CD14-positive monocyte (primary cell): ENCODE measurements at regions of chr10 and their contacts with region 1.

Region 1: DNA sequence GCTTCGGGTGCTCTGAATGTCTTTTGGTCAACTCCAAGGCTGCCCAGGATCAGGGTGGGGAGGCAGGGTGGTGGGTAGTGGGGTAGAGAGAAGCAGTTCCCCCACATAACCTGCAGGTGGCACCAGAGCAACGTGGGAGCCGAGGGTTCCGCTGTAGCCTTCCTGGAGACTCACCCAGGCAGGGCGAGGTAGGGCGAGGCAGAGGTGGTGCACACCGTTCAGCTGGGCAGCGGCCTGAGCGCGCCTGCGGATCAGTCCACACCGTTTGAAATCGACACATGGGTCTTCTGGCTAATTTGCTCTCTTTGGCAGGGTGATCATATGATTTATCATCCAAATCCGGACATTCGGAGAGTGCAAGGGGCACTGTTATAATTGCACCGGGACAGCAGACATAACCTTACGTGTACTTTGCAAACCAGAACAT is 41.4 kb upstream of the MAP3K8 start:
- DNase-seq: peak; percentile 62 to 79 (median 76)
- H3K4me3 ChIP-seq: peak overlapping the region in 1 of 3 experiments; percentile 46
- H3K4me3 Mint-ChIP-seq: peak overlapping the region; percentile 11 to 86
- H3K27ac ChIP-seq: no peak overlapping the region
- H3K27ac Mint-ChIP-seq: peak overlapping the region in 4 of 7 donors; percentile 3 to 62 (median 40)
- H3K4me1 ChIP-seq: peaks cover 28 to 30% of the 10 kb centered on the region in 2 donors
- H3K4me1 Mint-ChIP-seq: peaks cover 26% of the 10 kb centered on the region
- H3K27me3 ChIP-seq: no peaks in the 10 kb centered on the region
- H3K27me3 Mint-ChIP-seq: peaks cover 0 to 3% (median 2%) of the 10 kb centered on the region in 3 donors
- CTCF ChIP-seq: peak; percentile 94

Region 2: DNA sequence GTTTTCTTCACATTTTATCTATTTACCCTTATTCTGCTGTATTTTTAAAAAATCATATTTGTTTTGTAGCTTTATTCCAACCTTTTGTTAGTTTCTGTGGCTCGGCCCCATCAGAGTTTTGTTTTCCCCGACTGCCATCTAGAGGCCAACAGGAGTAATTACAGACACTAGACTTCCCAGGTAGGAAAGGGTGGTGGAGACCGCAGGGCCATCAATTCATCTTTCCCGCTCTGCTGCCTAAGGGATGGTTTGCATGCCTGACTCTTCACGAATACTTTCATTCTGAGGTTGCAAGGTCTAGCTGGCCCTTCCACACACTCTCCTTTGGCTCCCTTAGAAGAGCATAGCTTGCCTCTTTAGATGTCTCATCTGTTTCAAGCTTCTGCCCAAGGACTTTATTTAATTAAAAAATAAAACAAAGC is 198.7 kb after region 1 on chr10:
- intact Hi-C with region 1: loop called (anchors 2 kb)
- DNase-seq: peak; percentile 48 to 67 (median 52)
- H3K4me3 ChIP-seq: no peak overlapping the region
- H3K4me3 Mint-ChIP-seq: peak overlapping the region in 1 of 2 donors; percentile 30
- H3K27ac ChIP-seq: no peak overlapping the region
- H3K27ac Mint-ChIP-seq: peak overlapping the region in 1 of 7 donors; percentile 30
- H3K4me1 ChIP-seq: peaks cover 22 to 25% of the 10 kb centered on the region in 2 donors
- H3K4me1 Mint-ChIP-seq: peaks cover 28% of the 10 kb centered on the region
- H3K27me3 ChIP-seq: no peaks in the 10 kb centered on the region
- H3K27me3 Mint-ChIP-seq: peaks cover 0 to 7% (median 0%) of the 10 kb centered on the region in 3 donors
- CTCF ChIP-seq: peak; percentile 88

Region 3: GRCh38 chr10:30639946-30640786 is 247.6 kb after region 1 on chr10:
- intact Hi-C with region 1: loop called in 1 of 2 experiments (anchors 5 kb)
- DNase-seq: peak; percentile 38 to 55 (median 40)
- H3K4me3 ChIP-seq: no peak overlapping the region
- H3K4me3 Mint-ChIP-seq: no peak overlapping the region
- H3K27ac ChIP-seq: no peak overlapping the region
- H3K27ac Mint-ChIP-seq: peak overlapping the region in 1 of 7 donors; percentile 25
- H3K4me1 ChIP-seq: no peaks in the 10 kb centered on the region
- H3K4me1 Mint-ChIP-seq: peaks cover 8% of the 10 kb centered on the region
- H3K27me3 ChIP-seq: peaks cover 7 to 13% of the 10 kb centered on the region in 2 donors
- H3K27me3 Mint-ChIP-seq: peaks cover 27 to 30% (median 28%) of the 10 kb centered on the region in 3 donors
- CTCF ChIP-seq: peak; percentile 86

Region 4: GRCh38 chr10:30783939-30784500 is 391.4 kb after region 1 on chr10:
- intact Hi-C with region 1: no loop called
- DNase-seq: peak; percentile 58 to 71 (median 70)
- H3K4me3 ChIP-seq: peak overlapping the region; percentile 52 to 95 (median 91)
- H3K4me3 Mint-ChIP-seq: peak overlapping the region; percentile 79 to 94
- H3K27ac ChIP-seq: no peak overlapping the region
- H3K27ac Mint-ChIP-seq: peak overlapping the region in 4 of 7 donors; percentile 13 to 84 (median 22)
- H3K4me1 ChIP-seq: peaks cover 24 to 31% of the 10 kb centered on the region in 2 donors
- H3K4me1 Mint-ChIP-seq: peaks cover 30% of the 10 kb centered on the region
- H3K27me3 ChIP-seq: no peaks in the 10 kb centered on the region
- H3K27me3 Mint-ChIP-seq: peaks cover 0 to 4% (median 0%) of the 10 kb centered on the region in 3 donors
- CTCF ChIP-seq: peak; percentile 88